Activated naive CD4-positive, alpha-beta T cell treated with anti-CD3 and anti-CD28 coated beads, Interleukin-2, amount 10 ng/mL, durations not matched to agents 7 days and 5 days (primary cell): ENCODE measurements at regions of chr19 and their contacts with region 1.

Region 1: GRCh38 chr19:12139885-12140547 is at the start of gene ZNF20:
- DNase-seq: peak; percentile 95
- H3K4me3 Mint-ChIP-seq: peak within 1 kb of the TSS; percentile 93
- H3K27ac Mint-ChIP-seq: peak within 1 kb of the TSS; percentile 70
- H3K4me1 Mint-ChIP-seq: peaks cover 33% of the 10 kb centered on the region
- H3K27me3 Mint-ChIP-seq: no peaks in the 10 kb centered on the region

Region 2: DNA sequence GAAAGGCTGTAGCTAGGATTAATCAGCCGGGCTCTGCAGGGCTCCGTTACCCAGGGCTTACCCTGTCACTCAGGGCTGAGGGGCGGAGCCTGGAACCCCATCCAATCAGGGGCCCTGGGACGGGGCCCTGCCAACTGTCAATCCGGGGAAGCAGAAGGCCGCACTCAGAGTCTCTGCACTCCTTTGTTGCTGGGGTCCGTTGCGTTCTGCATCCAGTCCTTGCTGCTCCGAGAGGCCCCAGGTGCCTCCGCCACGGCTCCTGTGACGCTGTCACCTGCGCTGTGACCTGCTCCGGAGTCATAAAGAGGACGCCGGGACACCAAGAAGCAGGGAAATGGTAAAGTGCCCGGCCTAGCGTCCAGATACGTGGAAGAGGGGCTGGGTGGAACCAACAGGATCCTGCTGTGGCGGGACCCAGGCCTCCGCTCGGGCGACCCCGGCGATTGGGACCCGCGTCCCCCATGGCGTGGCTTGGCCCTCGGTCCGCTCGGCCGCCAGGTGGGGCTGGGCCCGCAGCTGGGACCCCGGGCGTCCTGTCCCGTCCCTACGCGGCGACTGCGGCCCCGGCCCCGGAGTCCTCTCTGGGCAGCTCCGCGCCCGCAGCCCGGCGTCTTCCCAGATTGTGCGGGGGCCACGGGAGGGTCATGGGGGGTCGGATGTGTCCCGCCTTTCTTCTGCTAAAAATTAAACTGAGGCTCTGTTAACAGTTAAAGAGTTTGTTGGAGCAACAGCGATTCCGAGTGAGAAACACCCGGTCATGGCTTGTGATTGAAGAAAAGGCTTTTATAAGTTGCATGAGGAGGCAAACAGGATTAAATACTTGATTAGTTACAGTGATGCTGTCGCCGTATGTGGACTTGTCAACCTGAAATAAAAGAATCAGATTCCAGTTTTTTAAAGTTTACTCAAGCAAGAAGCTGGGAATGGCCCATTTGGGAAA is 341.4 kb before region 1 on chr19 and contains the start of gene ZNF491:
- CTCF ChIA-PET with region 1: interaction called, 10 read pairs
- DNase-seq: peak; percentile 90
- H3K4me3 Mint-ChIP-seq: peak within 1 kb of the TSS; percentile 84
- H3K27ac Mint-ChIP-seq: peak within 1 kb of the TSS; percentile 76
- H3K4me1 Mint-ChIP-seq: peaks cover 17% of the 10 kb centered on the region
- H3K27me3 Mint-ChIP-seq: peaks cover 21% of the 10 kb centered on the region

Region 3: DNA sequence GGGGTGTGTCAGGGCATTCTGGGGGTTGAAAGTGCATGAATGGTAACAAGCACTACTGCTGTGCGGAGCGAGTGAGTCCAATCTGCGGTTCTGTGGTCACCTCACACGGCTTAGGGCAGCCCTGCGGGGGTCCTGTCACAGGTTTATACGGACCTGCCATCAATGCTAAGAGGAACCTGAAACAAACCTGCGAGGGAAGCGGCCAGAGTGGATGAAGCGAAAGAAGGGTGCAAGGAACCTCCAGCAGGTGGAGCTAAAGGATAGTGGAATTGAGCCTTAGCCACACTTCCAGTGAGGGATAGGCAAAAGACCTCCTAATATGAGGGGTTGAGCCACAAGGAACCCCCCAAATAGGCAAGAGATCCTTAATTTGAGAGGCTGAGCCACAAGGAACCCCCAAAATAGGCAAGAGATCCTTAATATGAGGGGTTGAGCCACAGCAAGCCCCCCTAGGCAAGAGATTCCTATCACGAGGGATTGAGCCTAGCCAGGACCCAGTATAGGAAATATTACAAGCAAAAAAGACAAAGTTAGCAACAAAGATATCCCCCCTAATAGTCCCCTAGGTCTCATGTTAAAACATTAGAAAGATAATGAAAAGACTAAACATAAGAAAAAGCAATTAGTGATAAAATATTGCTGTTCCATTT is 258.7 kb before region 1 on chr19:
- CTCF ChIA-PET with region 1: interaction called, 13 read pairs
- DNase-seq: peak; percentile 75
- H3K4me3 Mint-ChIP-seq: no peak overlapping the region
- H3K27ac Mint-ChIP-seq: no peak overlapping the region
- H3K4me1 Mint-ChIP-seq: peaks cover 2% of the 10 kb centered on the region
- H3K27me3 Mint-ChIP-seq: no peaks in the 10 kb centered on the region

Region 4: GRCh38 chr19:11924886-11925650 is 214.9 kb before region 1 on chr19 and contains the start of gene ZNF700:
- CTCF ChIA-PET with region 1: interaction called, 45 read pairs
- DNase-seq: peak; percentile 96
- H3K4me3 Mint-ChIP-seq: peak within 1 kb of the TSS; percentile 94
- H3K27ac Mint-ChIP-seq: peak within 1 kb of the TSS; percentile 98
- H3K4me1 Mint-ChIP-seq: peaks cover 40% of the 10 kb centered on the region
- H3K27me3 Mint-ChIP-seq: no peaks in the 10 kb centered on the region

Region 5: DNA sequence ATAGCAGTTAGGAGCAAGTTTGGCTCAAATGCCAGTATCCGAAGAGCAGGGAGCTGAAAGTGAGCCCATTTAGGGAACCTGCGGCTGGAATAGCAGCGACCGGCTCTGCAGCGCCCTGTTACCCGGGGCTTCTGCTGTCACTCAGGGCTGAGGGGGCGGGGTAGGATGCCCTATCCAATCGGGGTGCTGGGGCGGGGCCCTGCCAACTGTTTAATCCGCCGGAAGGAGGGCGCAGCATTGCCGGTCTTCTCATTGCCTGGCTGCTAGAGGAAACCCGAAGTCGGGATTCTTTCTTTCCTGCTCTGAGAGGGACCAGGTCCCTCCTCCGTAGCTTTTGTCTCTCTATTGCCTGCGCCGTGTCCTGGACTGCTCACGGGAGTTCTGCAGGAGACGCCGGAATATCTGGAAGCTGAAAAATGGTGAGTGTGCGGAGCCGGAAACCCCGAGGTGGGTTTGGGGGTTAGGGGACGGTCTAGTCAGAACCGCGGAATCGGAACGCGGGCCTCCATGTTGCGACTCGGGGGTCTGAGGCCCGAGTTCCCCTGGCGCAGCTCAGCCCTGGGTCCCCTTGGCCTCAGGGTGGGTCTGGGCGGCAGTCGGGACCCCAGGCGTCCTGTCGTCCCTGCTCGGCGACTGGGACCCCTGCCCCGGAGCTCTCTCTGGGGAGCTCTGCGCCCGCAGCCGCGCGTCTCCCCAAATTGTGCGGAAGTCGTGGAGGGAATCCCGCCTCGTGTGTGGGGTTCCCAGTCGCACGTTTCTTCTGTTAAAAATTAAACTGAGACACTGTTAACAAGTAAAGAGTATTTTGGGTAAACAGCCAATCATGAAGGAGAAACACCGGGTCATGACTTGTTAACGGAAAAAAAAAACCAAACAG is 152.4 kb before region 1 on chr19:
- CTCF ChIA-PET with region 1: interaction called, 10 read pairs
- DNase-seq: peak; percentile 97
- H3K4me3 Mint-ChIP-seq: peak overlapping the region; percentile 95
- H3K27ac Mint-ChIP-seq: peak overlapping the region; percentile 94
- H3K4me1 Mint-ChIP-seq: peaks cover 16% of the 10 kb centered on the region
- H3K27me3 Mint-ChIP-seq: peaks cover 4% of the 10 kb centered on the region

Region 6: GRCh38 chr19:12064590-12065538 is 75.2 kb before region 1 on chr19 and contains the start of gene ZNF844:
- CTCF ChIA-PET with region 1: interaction called, 29 read pairs
- DNase-seq: peak; percentile 73
- H3K4me3 Mint-ChIP-seq: peak within 1 kb of the TSS; percentile 75
- H3K27ac Mint-ChIP-seq: peak within 1 kb of the TSS; percentile 68
- H3K4me1 Mint-ChIP-seq: peaks cover 6% of the 10 kb centered on the region
- H3K27me3 Mint-ChIP-seq: no peaks in the 10 kb centered on the region

Region 7: GRCh38 chr19:12092065-12092867 is 47.8 kb before region 1 on chr19:
- CTCF ChIA-PET with region 1: interaction called, 33 read pairs
- DNase-seq: peak; percentile 77
- H3K4me3 Mint-ChIP-seq: peak overlapping the region; percentile 79
- H3K27ac Mint-ChIP-seq: peak overlapping the region; percentile 75
- H3K4me1 Mint-ChIP-seq: peaks cover 21% of the 10 kb centered on the region
- H3K27me3 Mint-ChIP-seq: peaks cover 13% of the 10 kb centered on the region